Right cardiac atrium (tissue), 5 donors: ENCODE measurements at regions of chr5 and their contacts with region 1.

Region 1: GRCh38 chr5:90783460-90784333 is 225.1 kb downstream of the ADGRV1 start:
- DNase-seq: peak; percentile 54 to 70 (median 57)
- ATAC-seq: peak; percentile 68 to 78
- H3K4me3 ChIP-seq: no peak overlapping the region
- H3K27ac ChIP-seq: no peak overlapping the region
- H3K4me1 ChIP-seq: no peaks in the 10 kb centered on the region
- H3K27me3 ChIP-seq: no peaks in the 10 kb centered on the region

Region 2: GRCh38 chr5:90434116-90434714 is 349.5 kb before region 1 on chr5:
- intact Hi-C with region 1: loop called in 2 of 4 experiments (anchors 10 kb)
- DNase-seq: peak in 2 of 3 donors; percentile 15 to 67
- ATAC-seq: peak; percentile 57
- H3K4me3 ChIP-seq: no peak overlapping the region
- H3K27ac ChIP-seq: no peak overlapping the region
- H3K4me1 ChIP-seq: no peaks in the 10 kb centered on the region
- H3K27me3 ChIP-seq: no peaks in the 10 kb centered on the region

Region 3: GRCh38 chr5:90440644-90441043 is 343.1 kb before region 1 on chr5:
- intact Hi-C with region 1: loop called in 3 of 4 experiments (anchors 5 to 10 kb)
- DNase-seq: no peak
- ATAC-seq: no peak
- H3K4me3 ChIP-seq: no peak overlapping the region
- H3K27ac ChIP-seq: no peak overlapping the region
- H3K4me1 ChIP-seq: no peaks in the 10 kb centered on the region
- H3K27me3 ChIP-seq: no peaks in the 10 kb centered on the region

Region 4: DNA sequence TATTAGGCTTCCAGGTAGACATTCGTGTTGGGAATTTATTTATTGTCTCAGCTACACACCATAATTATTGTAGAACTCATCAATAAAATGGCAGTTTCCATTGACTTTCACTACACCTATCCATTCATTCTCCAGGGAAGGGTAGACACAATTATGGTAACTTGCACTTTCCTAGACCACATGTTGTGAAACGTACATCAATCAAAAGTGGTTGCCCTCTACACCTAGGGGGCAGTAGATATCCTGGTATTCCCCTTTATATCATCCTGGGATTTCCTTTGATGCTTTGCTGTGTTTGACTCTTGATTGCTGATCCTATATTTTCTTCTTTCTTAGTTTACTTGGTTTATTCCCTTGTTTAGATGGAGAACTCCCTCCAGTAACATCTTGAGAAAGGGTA is 177.2 kb before region 1 on chr5:
- intact Hi-C with region 1: loop called in 1 of 4 experiments (anchors 10 kb)
- DNase-seq: no peak
- ATAC-seq: no peak
- H3K4me3 ChIP-seq: no peak overlapping the region
- H3K27ac ChIP-seq: no peak overlapping the region
- H3K4me1 ChIP-seq: no peaks in the 10 kb centered on the region
- H3K27me3 ChIP-seq: no peaks in the 10 kb centered on the region

Region 5: GRCh38 chr5:90658620-90659019 is 125.1 kb before region 1 on chr5:
- intact Hi-C with region 1: no loop called
- DNase-seq: no peak
- ATAC-seq: no peak
- H3K4me3 ChIP-seq: no peak overlapping the region
- H3K27ac ChIP-seq: no peak overlapping the region
- H3K4me1 ChIP-seq: no peaks in the 10 kb centered on the region
- H3K27me3 ChIP-seq: no peaks in the 10 kb centered on the region

Region 6: DNA sequence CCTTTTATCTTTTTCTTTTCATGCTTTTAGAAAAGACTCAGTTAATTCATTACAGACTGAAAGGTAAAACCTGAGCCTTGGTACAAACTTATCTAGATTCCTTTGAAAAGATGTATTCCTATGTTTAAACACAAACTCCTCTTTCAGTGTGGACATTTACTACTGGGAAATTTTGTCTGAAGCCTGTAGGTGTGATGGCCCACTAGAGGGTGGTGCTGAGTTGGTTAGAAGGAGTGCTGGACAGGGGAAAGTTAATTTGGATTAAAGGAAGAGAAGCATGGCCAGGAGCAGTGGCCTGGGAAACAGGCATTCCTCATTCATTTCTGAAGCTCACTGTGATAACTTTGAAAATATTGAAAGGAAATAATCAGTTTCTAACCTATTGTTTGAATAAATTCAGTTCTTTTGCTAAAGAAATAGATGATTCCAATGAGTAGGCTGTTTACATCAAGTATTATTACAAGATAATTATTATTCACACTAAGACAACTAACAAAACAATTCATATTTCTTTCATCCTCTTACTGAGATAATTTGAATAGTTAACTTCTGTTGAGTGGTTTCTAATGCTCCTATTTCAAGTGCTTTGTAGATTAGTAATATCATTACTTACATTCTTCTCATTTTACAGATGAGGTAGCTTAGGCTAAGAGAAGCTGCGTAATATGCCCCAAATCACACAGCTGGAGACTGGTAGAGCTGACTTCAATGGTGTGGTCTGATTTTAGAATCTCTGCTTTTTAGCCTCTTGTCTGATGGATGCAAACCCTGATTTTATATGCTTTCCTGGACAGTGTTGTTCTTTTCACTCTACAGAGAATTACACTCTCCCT is 74.2 kb before region 1 on chr5:
- intact Hi-C with region 1: loop called in 1 of 4 experiments (anchors 10 kb)
- DNase-seq: no peak
- ATAC-seq: peak in 1 of 2 donors; percentile 51
- H3K4me3 ChIP-seq: no peak overlapping the region
- H3K27ac ChIP-seq: no peak overlapping the region
- H3K4me1 ChIP-seq: no peaks in the 10 kb centered on the region
- H3K27me3 ChIP-seq: no peaks in the 10 kb centered on the region

Region 7: GRCh38 chr5:90898330-90899013 is 114.8 kb after region 1 on chr5:
- intact Hi-C with region 1: no loop called
- DNase-seq: no peak
- ATAC-seq: no peak
- H3K4me3 ChIP-seq: no peak overlapping the region
- H3K27ac ChIP-seq: no peak overlapping the region
- H3K4me1 ChIP-seq: no peaks in the 10 kb centered on the region
- H3K27me3 ChIP-seq: no peaks in the 10 kb centered on the region